Naive thymus-derived CD4-positive, alpha-beta T cell (primary cell): ENCODE measurements at regions of chr6 and their contacts with region 1.

Region 1: DNA sequence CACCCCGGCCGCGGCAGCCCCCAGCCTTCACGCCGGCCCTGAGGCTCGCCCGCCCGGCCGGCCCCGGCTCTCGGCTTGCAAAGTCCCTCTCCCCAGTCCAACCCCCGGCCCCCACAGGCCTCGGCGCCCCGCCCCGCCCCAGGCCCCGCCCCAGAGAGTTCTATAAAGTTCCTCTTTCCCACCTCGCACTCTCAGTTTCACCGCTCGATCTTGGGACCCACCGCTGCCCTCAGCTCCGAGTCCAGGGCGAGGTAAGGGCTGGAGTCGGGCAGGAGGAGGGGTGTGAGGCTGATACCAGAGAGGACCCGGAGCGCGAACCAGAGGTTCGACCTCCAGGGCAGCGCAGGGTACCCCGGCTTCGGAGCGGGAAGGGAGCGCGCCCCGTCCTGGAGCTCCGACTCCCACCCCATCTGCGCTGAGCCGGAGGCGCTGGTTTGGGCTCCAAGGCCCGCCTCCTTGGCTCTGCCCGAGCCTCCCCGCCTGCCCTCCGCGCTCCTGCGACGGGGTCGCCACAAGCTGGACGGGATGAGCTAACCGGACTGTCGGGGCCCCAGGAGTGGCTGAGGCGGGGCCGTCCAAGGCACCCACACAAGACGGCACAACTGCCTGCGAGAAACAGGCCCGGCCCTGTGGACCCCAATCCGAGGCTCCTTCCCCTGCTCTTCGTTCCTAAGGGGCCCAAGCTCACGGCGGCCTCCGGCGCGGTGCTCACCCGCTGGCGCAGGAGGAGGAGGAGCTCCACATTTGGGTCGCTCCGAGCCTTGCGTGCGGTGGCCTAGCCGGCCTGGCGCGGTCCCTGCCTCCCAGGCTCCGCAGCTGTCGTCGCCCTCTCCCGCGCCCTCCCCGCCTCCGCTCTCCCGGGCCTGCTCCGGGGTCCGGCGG is at the start of gene IRF4:
- DNase-seq: peak in 6 of 9 donors; percentile 20 to 87 (median 32)
- ATAC-seq: peak; percentile 66
- H3K4me3 ChIP-seq: peak within 1 kb of the TSS; percentile 72
- H3K4me3 Mint-ChIP-seq: peak within 1 kb of the TSS; percentile 88 to 100 (median 96)
- H3K27ac ChIP-seq: peak within 1 kb of the TSS; percentile 60
- H3K27ac Mint-ChIP-seq: peak within 1 kb of the TSS in 8 of 9 donors; percentile 21 to 98 (median 69)
- H3K4me1 ChIP-seq: peaks cover 13 to 16% of the 10 kb centered on the region in 2 donors
- H3K4me1 Mint-ChIP-seq: peaks cover 20 to 56% (median 31%) of the 10 kb centered on the region in 7 donors
- H3K27me3 ChIP-seq: no peaks in the 10 kb centered on the region
- H3K27me3 Mint-ChIP-seq: peaks cover 0 to 24% (median 3%) of the 10 kb centered on the region in 5 donors
- total RNA-seq, gene IRF4: 11.8 to 175 (median 27.1) TPM

Region 2: GRCh38 chr6:195861-196360 is 195.9 kb before region 1 on chr6:
- CTCF ChIA-PET with region 1: no interaction called
- POLR2A ChIA-PET with region 1: no interaction called
- intact Hi-C with region 1: loop called in 1 of 2 experiments (anchors 1 kb)
- DNase-seq: peak in 8 of 9 donors; percentile 42 to 76 (median 64)
- ATAC-seq: peak; percentile 88
- H3K4me3 ChIP-seq: no peak overlapping the region
- H3K4me3 Mint-ChIP-seq: peak overlapping the region in 9 of 10 donors; percentile 16 to 72 (median 44)
- H3K27ac ChIP-seq: no peak overlapping the region
- H3K27ac Mint-ChIP-seq: peak overlapping the region; percentile 16 to 89 (median 69)
- H3K4me1 ChIP-seq: peaks cover 31 to 32% of the 10 kb centered on the region in 2 donors
- H3K4me1 Mint-ChIP-seq: peaks cover 32 to 48% (median 43%) of the 10 kb centered on the region in 7 donors
- H3K27me3 ChIP-seq: no peaks in the 10 kb centered on the region
- H3K27me3 Mint-ChIP-seq: no peaks in the 10 kb centered on the region

Region 3: DNA sequence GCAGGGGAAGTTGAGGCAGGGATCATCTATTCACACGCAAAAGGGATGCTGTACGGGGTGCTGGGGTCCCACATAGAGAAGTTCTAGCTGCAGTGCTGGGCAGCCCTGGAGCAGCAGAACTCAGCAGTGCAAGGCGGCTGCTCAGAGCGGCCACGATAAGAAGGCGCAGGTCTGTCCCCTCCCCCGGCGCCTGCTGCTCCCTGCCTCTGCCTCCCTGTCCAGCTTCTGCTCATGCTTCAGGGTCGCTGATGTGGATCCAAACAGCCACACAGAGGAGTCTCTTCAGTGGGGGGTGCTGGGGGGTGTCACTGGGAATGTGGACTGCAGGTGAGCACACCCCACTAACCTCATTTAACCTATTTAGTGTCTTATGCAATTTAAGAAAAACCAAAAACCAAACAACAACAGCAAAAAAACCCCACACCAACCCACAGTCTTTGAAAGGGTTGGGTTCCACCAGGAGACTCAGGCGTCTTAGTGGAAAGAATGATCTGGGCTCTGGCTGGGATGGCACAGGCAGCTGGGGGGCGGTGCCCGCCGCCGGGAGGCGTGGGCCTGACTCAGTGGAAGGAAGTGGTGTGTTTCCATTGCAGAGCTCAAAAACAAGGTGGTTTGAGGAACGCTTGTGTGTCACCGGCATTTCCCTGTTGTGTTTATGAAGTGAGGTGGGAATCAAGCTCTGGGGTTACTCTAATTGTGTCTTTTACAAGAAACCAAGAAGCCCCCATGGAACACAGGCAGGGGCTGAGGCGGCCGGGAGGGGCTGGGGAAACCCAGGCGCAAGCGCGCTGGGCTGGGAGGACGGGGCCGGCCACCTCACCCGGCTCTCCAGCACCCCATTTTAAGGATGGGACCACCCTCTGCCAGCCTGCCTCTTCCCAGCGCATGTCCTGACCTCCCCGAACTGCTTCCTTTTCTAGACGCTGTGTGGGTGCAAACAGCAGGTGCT is 54.9 kb after region 1 on chr6:
- CTCF ChIA-PET with region 1: interaction called, 5 read pairs
- POLR2A ChIA-PET with region 1: interaction called, 5 read pairs
- intact Hi-C with region 1: loop called (anchors 1 to 2 kb)
- DNase-seq: peak in 8 of 9 donors; percentile 51 to 95 (median 66)
- ATAC-seq: peak; percentile 73
- H3K4me3 ChIP-seq: peak overlapping the region; percentile 38
- H3K4me3 Mint-ChIP-seq: peak overlapping the region; percentile 34 to 76 (median 59)
- H3K27ac ChIP-seq: no peak overlapping the region
- H3K27ac Mint-ChIP-seq: peak overlapping the region; percentile 70 to 92 (median 80)
- H3K4me1 ChIP-seq: peaks cover 36 to 48% of the 10 kb centered on the region in 2 donors
- H3K4me1 Mint-ChIP-seq: peaks cover 40 to 57% (median 56%) of the 10 kb centered on the region in 7 donors
- H3K27me3 ChIP-seq: no peaks in the 10 kb centered on the region
- H3K27me3 Mint-ChIP-seq: peaks cover 0 to 2% (median 0%) of the 10 kb centered on the region in 5 donors

Region 4: DNA sequence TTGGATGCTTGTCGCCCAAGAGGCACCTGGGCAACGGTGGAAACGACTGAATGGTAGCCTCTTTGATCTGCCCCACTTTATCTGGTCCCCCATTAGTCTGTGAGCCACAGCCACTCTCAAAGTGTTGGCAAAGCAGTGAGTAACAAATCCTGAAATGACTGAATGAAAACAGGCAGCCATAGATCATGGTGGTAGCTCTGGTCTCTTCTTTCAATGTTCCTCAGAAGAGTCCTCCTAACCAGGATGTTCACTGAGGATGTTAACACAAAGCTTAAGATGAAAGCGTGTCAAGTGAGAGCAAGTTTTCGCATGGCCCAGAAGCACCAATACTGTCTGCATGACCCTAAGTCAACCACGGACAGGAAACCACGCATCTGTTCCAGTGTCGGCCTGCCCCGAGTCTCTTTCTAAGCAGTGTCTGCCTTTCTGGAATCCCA is 107.0 kb after region 1 on chr6:
- CTCF ChIA-PET with region 1: interaction called, 4 read pairs
- POLR2A ChIA-PET with region 1: interaction called, 4 read pairs
- intact Hi-C with region 1: loop called in 1 of 2 experiments (anchors 1 kb)
- DNase-seq: peak in 2 of 9 donors; percentile 25 to 57
- ATAC-seq: peak; percentile 68
- H3K4me3 ChIP-seq: no peak overlapping the region
- H3K4me3 Mint-ChIP-seq: peak overlapping the region in 9 of 10 donors; percentile 50 to 86 (median 78)
- H3K27ac ChIP-seq: peak overlapping the region; percentile 40
- H3K27ac Mint-ChIP-seq: peak overlapping the region; percentile 46 to 95 (median 75)
- H3K4me1 ChIP-seq: peaks cover 35 to 38% of the 10 kb centered on the region in 2 donors
- H3K4me1 Mint-ChIP-seq: peaks cover 33 to 83% (median 69%) of the 10 kb centered on the region in 7 donors
- H3K27me3 ChIP-seq: no peaks in the 10 kb centered on the region
- H3K27me3 Mint-ChIP-seq: no peaks in the 10 kb centered on the region

Region 5: DNA sequence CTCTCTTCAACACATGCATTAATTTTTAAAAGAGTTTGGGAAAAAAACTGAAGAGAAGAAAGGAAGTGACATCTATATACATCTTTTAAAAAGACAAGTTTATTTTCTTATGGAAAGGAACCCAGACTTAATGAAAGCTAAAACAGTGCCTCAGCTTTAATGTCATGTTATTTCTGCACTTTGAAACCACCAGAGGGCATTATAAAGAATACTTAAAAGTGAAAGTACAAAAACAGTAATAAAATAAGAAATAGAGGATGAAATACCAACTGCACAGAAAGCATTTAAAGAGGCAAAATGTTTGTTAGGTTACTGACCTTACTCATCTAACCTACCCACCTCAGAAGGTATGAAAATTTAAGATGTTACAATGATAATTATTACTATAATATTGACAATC is 166.3 kb after region 1 on chr6:
- CTCF ChIA-PET with region 1: interaction called, 3 read pairs
- POLR2A ChIA-PET with region 1: no interaction called
- intact Hi-C with region 1: loop called (anchors 2 kb)
- DNase-seq: peak in 3 of 9 donors; percentile 2 to 7 (median 6)
- ATAC-seq: no peak
- H3K4me3 ChIP-seq: no peak overlapping the region
- H3K4me3 Mint-ChIP-seq: peak overlapping the region in 5 of 10 donors; percentile 25 to 42 (median 33)
- H3K27ac ChIP-seq: no peak overlapping the region
- H3K27ac Mint-ChIP-seq: peak overlapping the region in 5 of 9 donors; percentile 9 to 62 (median 19)
- H3K4me1 ChIP-seq: peaks cover 0 to 11% of the 10 kb centered on the region in 2 donors
- H3K4me1 Mint-ChIP-seq: peaks cover 13 to 31% (median 27%) of the 10 kb centered on the region in 7 donors
- H3K27me3 ChIP-seq: no peaks in the 10 kb centered on the region
- H3K27me3 Mint-ChIP-seq: no peaks in the 10 kb centered on the region

Region 6: GRCh38 chr6:710601-711571 is 319.1 kb after region 1 on chr6:
- CTCF ChIA-PET with region 1: no interaction called
- POLR2A ChIA-PET with region 1: interaction called, 6 read pairs
- intact Hi-C with region 1: loop called (anchors 2 to 5 kb)
- DNase-seq: peak; percentile 26 to 72 (median 63)
- ATAC-seq: peak; percentile 90
- H3K4me3 ChIP-seq: peak overlapping the region; percentile 69
- H3K4me3 Mint-ChIP-seq: peak overlapping the region; percentile 89 to 99 (median 98)
- H3K27ac ChIP-seq: peak overlapping the region; percentile 81
- H3K27ac Mint-ChIP-seq: peak overlapping the region; percentile 92 to 100 (median 99)
- H3K4me1 ChIP-seq: peaks cover 5 to 8% of the 10 kb centered on the region in 2 donors
- H3K4me1 Mint-ChIP-seq: peaks cover 8 to 42% (median 21%) of the 10 kb centered on the region in 7 donors
- H3K27me3 ChIP-seq: no peaks in the 10 kb centered on the region
- H3K27me3 Mint-ChIP-seq: peaks cover 0 to 13% (median 0%) of the 10 kb centered on the region in 5 donors

Region 7: GRCh38 chr6:1396952-1397868 is 1005.4 kb after region 1 on chr6:
- CTCF ChIA-PET with region 1: interaction called, 3 read pairs
- POLR2A ChIA-PET with region 1: no interaction called
- intact Hi-C with region 1: loop called (anchors 1 to 5 kb)
- DNase-seq: peak; percentile 39 to 75 (median 67)
- ATAC-seq: peak; percentile 78
- H3K4me3 ChIP-seq: no peak overlapping the region
- H3K4me3 Mint-ChIP-seq: peak overlapping the region in 5 of 10 donors; percentile 4 to 57 (median 41)
- H3K27ac ChIP-seq: no peak overlapping the region
- H3K27ac Mint-ChIP-seq: peak overlapping the region in 1 of 9 donors; percentile 24
- H3K4me1 ChIP-seq: no peaks in the 10 kb centered on the region
- H3K4me1 Mint-ChIP-seq: peaks cover 0 to 16% (median 6%) of the 10 kb centered on the region in 7 donors
- H3K27me3 ChIP-seq: peaks cover 0 to 17% of the 10 kb centered on the region in 2 donors
- H3K27me3 Mint-ChIP-seq: peaks cover 54 to 67% (median 59%) of the 10 kb centered on the region in 5 donors